IMR-90 (cell line): ENCODE measurements at regions of chr1 and their contacts with region 1.

Region 1: DNA sequence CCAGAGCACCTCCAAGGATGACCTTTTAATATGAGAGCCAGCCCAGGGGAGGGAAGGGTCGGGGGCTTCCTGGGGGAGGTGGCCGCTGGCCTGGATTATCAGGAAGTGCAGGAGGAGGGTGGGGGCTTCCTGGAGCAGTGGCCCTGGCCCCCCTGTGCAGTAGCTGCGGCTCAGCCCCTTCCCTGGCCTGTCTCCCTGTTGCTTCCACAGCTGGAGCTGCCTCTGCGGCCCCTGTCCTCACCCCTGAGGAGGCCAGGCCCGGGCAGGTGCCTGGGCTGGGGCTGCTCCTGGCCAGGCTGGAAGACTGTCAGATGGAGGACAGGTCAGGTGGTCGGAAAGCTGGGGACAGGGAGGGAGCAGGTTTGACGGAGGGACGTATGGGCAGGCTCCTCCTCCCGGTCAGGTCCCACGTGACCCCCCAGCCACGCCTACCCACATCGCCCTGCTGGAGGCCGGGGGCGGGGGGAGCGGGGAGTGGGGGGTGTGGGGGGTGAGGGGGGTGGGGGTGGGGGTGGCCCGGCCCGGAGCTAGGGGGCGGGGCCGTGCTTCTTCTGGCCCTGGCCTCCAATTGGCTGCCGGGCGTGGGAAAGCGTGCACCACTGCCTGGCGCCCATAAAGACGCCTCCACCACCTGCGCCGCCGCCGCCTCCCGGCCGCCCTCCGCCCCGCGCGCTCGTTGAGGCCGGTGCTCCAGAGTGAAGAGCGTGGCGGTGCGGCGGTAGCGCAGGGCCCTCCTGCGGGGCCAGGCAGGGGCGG is 10.2 kb upstream of the TNFRSF14 start:
- DNase-seq: peak; percentile 66
- ATAC-seq: peak; percentile 65
- H3K4me3 ChIP-seq: peak overlapping the region; percentile 40
- H3K27ac ChIP-seq: no peak overlapping the region; the same call in 1 of the 2 replicates
- H3K4me1 ChIP-seq: peaks cover 10% of the 10 kb centered on the region
- H3K27me3 ChIP-seq: peaks cover 2% of the 10 kb centered on the region; the same call in 1 of the 2 replicates
- CTCF ChIP-seq: no peak
- POLR2A ChIP-seq: no peak
- RAD21 ChIP-seq: no peak

Region 2: GRCh38 chr1:2290595-2291510 is 255.1 kb before region 1 on chr1:
- CTCF ChIA-PET with region 1: no interaction called
- POLR2A ChIA-PET with region 1: no interaction called
- dilution Hi-C with region 1: no loop called
- in situ Hi-C with region 1: no loop called
- intact Hi-C with region 1: no loop called
- DNase-seq: peak; percentile 98
- ATAC-seq: peak; percentile 77
- H3K4me3 ChIP-seq: peak overlapping the region; percentile 14; the same call in 1 of the 2 replicates
- H3K27ac ChIP-seq: peak overlapping the region; percentile 98
- H3K4me1 ChIP-seq: peaks cover 50% of the 10 kb centered on the region
- H3K27me3 ChIP-seq: no peaks in the 10 kb centered on the region
- CTCF ChIP-seq: no peak
- POLR2A ChIP-seq: no peak; the same call in 1 of the 2 replicates
- RAD21 ChIP-seq: no peak

Region 3: GRCh38 chr1:2429780-2430591 is 116.0 kb before region 1 on chr1:
- CTCF ChIA-PET with region 1: interaction called, 3 read pairs
- POLR2A ChIA-PET with region 1: no interaction called
- dilution Hi-C with region 1: no loop called
- in situ Hi-C with region 1: no loop called
- intact Hi-C with region 1: loop called (anchors 5 kb)
- DNase-seq: no peak
- ATAC-seq: no peak
- H3K4me3 ChIP-seq: no peak overlapping the region
- H3K27ac ChIP-seq: no peak overlapping the region
- H3K4me1 ChIP-seq: no peaks in the 10 kb centered on the region
- H3K27me3 ChIP-seq: peaks cover 43% of the 10 kb centered on the region
- CTCF ChIP-seq: peak; percentile 44
- POLR2A ChIP-seq: no peak
- RAD21 ChIP-seq: peak; percentile 51

Region 4: DNA sequence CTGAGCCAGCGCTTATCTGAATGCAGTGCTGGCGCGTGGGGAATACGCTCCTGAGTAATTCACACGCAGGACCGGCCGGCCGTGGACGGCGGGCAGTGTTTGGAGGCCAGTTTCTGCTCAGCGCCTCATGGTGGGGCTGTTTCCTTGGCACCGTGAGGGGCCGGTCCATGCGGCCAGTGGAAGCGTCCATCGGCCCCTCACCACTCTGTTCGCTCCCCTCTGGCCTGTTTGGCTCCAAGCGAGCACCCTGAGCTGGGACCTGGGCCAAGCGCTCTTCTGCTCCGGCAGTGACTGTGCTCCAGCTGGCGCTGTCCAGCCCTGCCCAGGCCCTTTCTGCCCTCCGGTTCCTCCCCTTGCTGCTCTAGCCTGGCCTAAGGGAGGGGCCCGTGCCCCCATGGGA is 86.2 kb before region 1 on chr1:
- CTCF ChIA-PET with region 1: no interaction called
- POLR2A ChIA-PET with region 1: no interaction called
- dilution Hi-C with region 1: no loop called
- in situ Hi-C with region 1: no loop called
- intact Hi-C with region 1: loop called (anchors 1 kb)
- DNase-seq: peak; percentile 73
- ATAC-seq: peak; percentile 88
- H3K4me3 ChIP-seq: no peak overlapping the region
- H3K27ac ChIP-seq: no peak overlapping the region
- H3K4me1 ChIP-seq: no peaks in the 10 kb centered on the region
- H3K27me3 ChIP-seq: peaks cover 26% of the 10 kb centered on the region
- CTCF ChIP-seq: peak; percentile 48
- POLR2A ChIP-seq: no peak
- RAD21 ChIP-seq: peak; percentile 67